PC-3 (cell line): ENCODE measurements at regions of chr13 and their contacts with region 1.

Region 1: DNA sequence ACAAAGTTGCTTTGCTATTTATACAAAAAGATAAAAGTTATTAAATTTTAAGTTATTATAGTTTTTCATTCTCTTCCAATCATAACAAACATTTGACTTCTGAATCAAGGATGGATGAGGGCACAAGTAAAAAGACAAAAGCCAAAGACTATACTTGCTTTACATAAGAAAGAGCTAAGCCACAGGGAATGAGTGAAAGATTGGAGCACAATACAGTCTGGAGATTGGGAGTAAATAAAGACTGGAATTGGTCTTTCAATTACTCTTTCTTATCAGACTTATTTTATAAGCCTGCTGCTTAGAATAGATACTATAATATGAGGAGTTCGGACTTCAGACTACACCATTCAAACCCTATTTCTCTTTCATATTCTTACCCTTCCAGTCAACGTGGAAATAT is 1874.1 kb upstream of the PRR20A start:
- DNase-seq: no peak
- ATAC-seq: no peak
- H3K4me3 ChIP-seq: no peak overlapping the region
- H3K27ac ChIP-seq: no peak overlapping the region
- H3K4me1 ChIP-seq: no peaks in the 10 kb centered on the region
- H3K27me3 ChIP-seq: no peaks in the 10 kb centered on the region
- CTCF ChIP-seq: no peak

Region 2: DNA sequence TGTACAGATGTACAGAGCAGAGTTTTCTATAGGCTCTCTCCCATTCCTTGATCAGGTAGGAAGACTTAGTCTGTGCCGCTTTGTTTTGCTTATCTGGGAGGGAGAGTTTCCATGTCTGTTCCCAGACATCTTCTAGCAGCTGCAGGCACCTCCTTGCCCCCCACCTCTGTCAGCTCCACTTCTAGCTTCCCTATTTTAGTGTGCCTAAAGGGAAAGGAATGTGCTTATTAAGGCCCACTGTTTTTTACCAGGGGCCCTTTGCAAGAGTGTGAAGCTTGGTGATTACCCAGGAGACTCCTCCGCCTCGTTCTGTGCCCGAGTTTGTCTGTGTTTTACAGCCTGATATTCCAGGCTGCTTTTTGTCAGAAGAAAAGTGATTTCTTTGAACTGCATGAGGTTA is 253.6 kb before region 1 on chr13:
- CTCF ChIA-PET with region 1: no interaction called
- POLR2A ChIA-PET with region 1: no interaction called
- intact Hi-C with region 1: no loop called
- DNase-seq: no peak
- ATAC-seq: no peak
- H3K4me3 ChIP-seq: no peak overlapping the region
- H3K27ac ChIP-seq: no peak overlapping the region
- H3K4me1 ChIP-seq: no peaks in the 10 kb centered on the region
- H3K27me3 ChIP-seq: no peaks in the 10 kb centered on the region
- CTCF ChIP-seq: no peak

Region 3: DNA sequence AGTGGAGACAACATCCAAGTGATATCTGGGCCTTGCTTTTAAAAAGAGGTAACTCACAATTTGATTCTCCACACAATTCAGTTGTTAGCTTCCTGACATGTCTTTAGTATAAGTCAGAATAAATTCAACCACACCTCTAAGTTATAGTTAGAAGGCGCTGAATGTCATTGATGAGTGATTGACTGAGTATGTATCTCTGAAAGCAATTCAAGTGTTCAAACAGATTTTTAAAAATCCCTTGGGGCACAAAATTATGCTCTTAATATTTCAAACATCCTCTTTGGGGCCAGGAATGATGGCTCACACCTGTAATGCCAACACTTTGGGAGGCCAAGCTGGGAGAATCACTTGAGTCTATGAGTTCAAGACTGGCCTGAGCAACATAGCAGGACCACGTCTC is 1737.0 kb after region 1 on chr13:
- CTCF ChIA-PET with region 1: no interaction called
- POLR2A ChIA-PET with region 1: no interaction called
- intact Hi-C with region 1: loop called (anchors 10 kb)
- DNase-seq: no peak
- ATAC-seq: no peak
- H3K4me3 ChIP-seq: no peak overlapping the region
- H3K27ac ChIP-seq: no peak overlapping the region
- H3K4me1 ChIP-seq: no peaks in the 10 kb centered on the region
- H3K27me3 ChIP-seq: no peaks in the 10 kb centered on the region
- CTCF ChIP-seq: no peak